Esophagus squamous epithelium (tissue), 5 donors: ENCODE measurements at regions of chr12 and their contacts with region 1.

Region 1: DNA sequence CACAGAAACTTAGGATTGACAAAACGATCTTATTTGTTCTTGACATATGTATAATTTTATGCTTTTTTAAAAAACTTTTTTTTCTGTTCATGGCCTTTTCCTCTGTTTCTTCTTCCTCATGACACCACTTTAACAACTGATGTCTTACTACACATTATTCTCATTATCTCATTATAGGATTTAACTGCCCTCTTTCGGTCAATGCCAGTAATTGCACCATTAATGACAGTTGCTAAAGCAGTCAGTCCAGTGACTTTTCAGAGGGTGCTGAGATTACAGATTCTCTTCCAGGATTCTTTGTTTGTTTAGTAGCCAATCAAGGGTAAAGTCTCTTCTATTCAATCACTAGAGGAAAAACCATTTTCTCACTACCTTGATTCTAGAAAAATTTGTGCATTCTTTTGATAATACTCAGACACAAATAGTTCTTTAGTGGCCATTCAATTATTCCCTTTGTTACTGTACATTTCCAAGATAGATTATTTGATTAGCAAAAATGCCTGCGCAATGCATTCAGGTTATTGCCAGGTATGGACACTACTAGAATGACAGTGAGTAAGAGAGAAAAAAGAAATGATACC is 50.1 kb downstream of the KLRG1 start:
- DNase-seq: no peak
- H3K4me3 ChIP-seq: no peak overlapping the region
- H3K27ac ChIP-seq: no peak overlapping the region
- H3K4me1 ChIP-seq: no peaks in the 10 kb centered on the region
- H3K27me3 ChIP-seq: no peaks in the 10 kb centered on the region
- CTCF ChIP-seq: peak; percentile 49 to 85 (median 73)
- POLR2A ChIP-seq: no peak

Region 2: GRCh38 chr12:8949342-8950220 is 89.9 kb before region 1 on chr12 and contains the start of gene M6PR:
- intact Hi-C with region 1: loop called (anchors 10 kb)
- DNase-seq: peak; percentile 82
- H3K4me3 ChIP-seq: peak within 1 kb of the TSS; percentile 69 to 97 (median 82)
- H3K27ac ChIP-seq: peak within 1 kb of the TSS; percentile 94 to 99 (median 96)
- H3K4me1 ChIP-seq: peaks cover 4 to 38% (median 20%) of the 10 kb centered on the region in 3 donors
- H3K27me3 ChIP-seq: no peaks in the 10 kb centered on the region
- CTCF ChIP-seq: peak in 5 of 6 experiments; percentile 29 to 50 (median 45)
- POLR2A ChIP-seq: peak in 3 of 4 donors; percentile 34 to 81 (median 61)
- total RNA-seq, gene M6PR: 60.1 to 120 (median 108) TPM

Region 3: DNA sequence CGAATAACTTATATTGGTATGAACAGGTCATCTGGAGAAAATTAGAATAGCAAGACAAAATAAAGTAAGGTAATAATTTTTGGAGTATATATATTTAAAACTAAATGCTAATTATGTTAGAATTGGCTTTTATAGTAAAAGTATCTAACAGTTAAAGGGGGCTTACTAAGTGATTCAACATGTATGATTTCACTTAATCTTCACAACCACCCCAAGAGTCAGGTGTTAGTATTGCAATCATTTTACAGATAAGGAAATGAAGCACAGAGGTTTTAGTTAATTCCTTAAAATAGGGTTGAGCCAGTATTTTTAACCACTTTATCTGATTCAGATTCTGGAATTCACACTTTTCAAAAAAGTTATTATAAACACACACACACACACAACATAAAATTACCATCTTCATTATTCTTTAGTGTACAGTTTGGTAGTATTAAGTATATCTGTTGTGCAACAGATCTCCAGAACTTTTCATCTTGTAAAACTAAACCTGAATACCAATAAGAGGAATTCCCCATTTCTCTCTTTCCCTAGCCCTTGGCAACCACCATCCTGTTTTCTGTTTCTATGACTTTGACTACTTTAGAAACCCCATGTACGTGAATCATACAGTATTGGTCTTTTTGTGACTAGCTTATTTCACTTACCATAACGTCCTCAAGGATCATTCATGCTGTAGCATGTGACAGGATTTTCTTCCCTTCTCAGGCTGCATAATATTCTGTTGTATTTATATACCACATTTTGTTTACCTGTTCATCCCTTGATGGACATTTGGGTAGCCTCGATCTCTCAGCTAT is 63.8 kb after region 1 on chr12:
- intact Hi-C with region 1: no loop called
- DNase-seq: no peak
- H3K4me3 ChIP-seq: no peak overlapping the region
- H3K27ac ChIP-seq: no peak overlapping the region
- H3K4me1 ChIP-seq: no peaks in the 10 kb centered on the region
- H3K27me3 ChIP-seq: no peaks in the 10 kb centered on the region
- CTCF ChIP-seq: no peak
- POLR2A ChIP-seq: no peak